MCF 10A (cell line): ENCODE measurements at regions of chr11 and their contacts with region 1.

Region 1: DNA sequence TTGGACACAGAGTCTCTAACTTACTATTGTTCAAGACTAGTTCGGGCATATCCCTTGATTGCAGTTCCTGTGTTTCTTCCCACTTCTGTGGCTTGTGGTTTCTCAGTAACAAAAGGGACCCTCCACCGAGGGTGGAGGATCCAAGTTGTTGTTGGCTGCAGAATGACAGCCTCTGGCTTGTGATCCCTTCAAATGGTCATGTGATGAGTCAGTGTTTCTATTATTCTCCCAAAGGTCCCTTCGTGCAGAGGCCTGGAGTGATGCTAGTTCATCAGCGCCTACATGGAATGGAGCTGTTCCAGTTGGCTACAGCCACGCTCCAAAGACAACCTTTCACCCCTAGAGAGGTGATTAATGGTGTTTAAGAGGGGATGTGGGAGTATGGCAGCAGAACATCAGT is 2.6 kb upstream of the VWCE start:
- DNase-seq: peak; percentile 96
- H3K4me3 Mint-ChIP-seq: peak overlapping the region; percentile 35
- H3K27ac Mint-ChIP-seq: peak overlapping the region; percentile 91
- H3K4me1 Mint-ChIP-seq: peaks cover 28% of the 10 kb centered on the region
- H3K27me3 Mint-ChIP-seq: peaks cover 13% of the 10 kb centered on the region
- CTCF ChIP-seq: no peak

Region 2: DNA sequence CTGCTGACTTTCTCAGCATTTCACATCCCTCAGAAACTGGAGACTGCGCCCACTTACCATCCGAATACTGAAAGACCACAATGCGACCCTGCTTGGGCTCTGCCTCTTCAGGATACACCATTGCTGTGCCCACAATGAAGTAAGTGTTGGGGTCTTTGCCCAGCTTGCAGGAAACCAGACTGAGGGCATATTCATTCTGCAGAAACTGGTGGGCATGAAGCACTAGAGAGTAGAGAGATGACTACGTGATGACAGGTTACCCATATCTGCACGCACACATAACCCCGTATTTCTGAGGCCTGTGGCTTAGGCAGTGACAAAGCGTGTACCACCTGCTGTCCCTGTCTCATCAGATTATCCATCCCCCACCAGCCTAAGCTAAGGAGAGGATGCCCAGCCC is 12.0 kb after region 1 on chr11:
- CTCF ChIA-PET with region 1: no interaction called
- POLR2A ChIA-PET with region 1: interaction called, 24 read pairs
- intact Hi-C with region 1: no loop called
- DNase-seq: no peak
- H3K4me3 Mint-ChIP-seq: no peak overlapping the region
- H3K27ac Mint-ChIP-seq: no peak overlapping the region
- H3K4me1 Mint-ChIP-seq: no peaks in the 10 kb centered on the region
- H3K27me3 Mint-ChIP-seq: no peaks in the 10 kb centered on the region
- CTCF ChIP-seq: no peak